CD8-positive, alpha-beta T cell (primary cell): ENCODE measurements at regions of chr11 and their contacts with region 1.

Region 1: GRCh38 chr11:72736452-72737069 is 15.6 kb downstream of the ARAP1 start:
- DNase-seq: peak; percentile 50 to 95 (median 75)
- ATAC-seq: peak; percentile 89
- H3K4me3 ChIP-seq: no peak overlapping the region
- H3K4me3 Mint-ChIP-seq: peak overlapping the region; percentile 47
- H3K27ac ChIP-seq: peak overlapping the region; percentile 60 to 96
- H3K27ac Mint-ChIP-seq: peak overlapping the region; percentile 99
- H3K4me1 ChIP-seq: peaks cover 53% of the 10 kb centered on the region
- H3K4me1 Mint-ChIP-seq: peaks cover 56% of the 10 kb centered on the region
- H3K27me3 ChIP-seq: no peaks in the 10 kb centered on the region
- H3K27me3 Mint-ChIP-seq: no peaks in the 10 kb centered on the region
- CTCF ChIP-seq: no peak

Region 2: GRCh38 chr11:72712168-72712751 is 24.3 kb before region 1 on chr11:
- CTCF ChIA-PET with region 1: no interaction called
- POLR2A ChIA-PET with region 1: no interaction called
- intact Hi-C with region 1: no loop called
- DNase-seq: no peak
- ATAC-seq: no peak
- H3K4me3 ChIP-seq: no peak overlapping the region
- H3K4me3 Mint-ChIP-seq: no peak overlapping the region
- H3K27ac ChIP-seq: no peak overlapping the region
- H3K27ac Mint-ChIP-seq: no peak overlapping the region
- H3K4me1 ChIP-seq: peaks cover 17% of the 10 kb centered on the region
- H3K4me1 Mint-ChIP-seq: peaks cover 23% of the 10 kb centered on the region
- H3K27me3 ChIP-seq: no peaks in the 10 kb centered on the region
- H3K27me3 Mint-ChIP-seq: no peaks in the 10 kb centered on the region
- CTCF ChIP-seq: no peak

Region 3: DNA sequence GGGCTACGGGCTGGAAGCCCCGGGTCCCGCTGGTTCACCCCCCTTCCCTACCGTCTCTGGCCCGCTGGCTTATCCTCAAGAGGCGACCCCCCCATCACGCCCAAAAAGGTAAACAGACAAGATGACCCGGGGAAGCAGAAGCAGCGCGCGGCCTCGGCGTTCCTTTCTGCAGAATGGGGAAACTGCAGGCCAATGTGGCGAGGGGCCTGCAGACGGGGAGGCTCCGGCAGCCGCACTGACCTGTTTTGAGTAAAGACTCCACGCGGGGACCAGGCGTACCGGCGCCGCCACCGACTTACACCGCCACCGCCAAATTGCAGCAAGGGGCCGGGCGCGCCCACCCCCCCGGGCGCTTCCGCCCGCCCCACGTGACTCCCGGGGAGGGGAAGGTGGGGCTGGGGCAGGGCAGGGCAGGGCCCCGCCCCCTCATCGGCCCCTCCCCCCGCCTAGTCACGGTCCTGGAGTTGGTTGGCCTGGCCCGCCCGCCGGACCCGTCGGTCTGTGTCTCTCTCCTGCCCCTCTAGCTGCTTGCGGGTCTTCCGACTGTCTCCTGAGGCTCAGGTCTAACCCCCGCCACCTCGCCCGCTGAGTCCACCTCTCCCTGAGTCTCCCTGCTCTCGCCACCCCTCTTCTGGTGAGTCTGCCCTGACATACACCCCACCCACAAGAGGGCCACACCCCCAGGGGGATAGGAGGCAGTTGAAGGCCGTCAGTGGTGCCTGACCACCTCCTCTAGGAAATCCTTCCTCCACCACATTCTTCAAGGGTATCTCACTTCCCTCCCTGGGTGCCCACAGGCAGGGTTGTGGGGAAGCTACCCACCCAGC is 15.7 kb after region 1 on chr11 and contains the start of gene ARAP1:
- CTCF ChIA-PET with region 1: interaction called, 3 read pairs
- POLR2A ChIA-PET with region 1: interaction called, 10 read pairs
- intact Hi-C with region 1: loop called (anchors 1 to 2 kb)
- DNase-seq: peak; percentile 53 to 91 (median 80)
- ATAC-seq: peak; percentile 88
- H3K4me3 ChIP-seq: peak within 1 kb of the TSS; percentile 92 to 95
- H3K4me3 Mint-ChIP-seq: peak within 1 kb of the TSS; percentile 95
- H3K27ac ChIP-seq: peak within 1 kb of the TSS; percentile 68 to 70
- H3K27ac Mint-ChIP-seq: peak within 1 kb of the TSS; percentile 94
- H3K4me1 ChIP-seq: peaks cover 40% of the 10 kb centered on the region
- H3K4me1 Mint-ChIP-seq: peaks cover 45% of the 10 kb centered on the region
- H3K27me3 ChIP-seq: no peaks in the 10 kb centered on the region
- H3K27me3 Mint-ChIP-seq: no peaks in the 10 kb centered on the region
- CTCF ChIP-seq: no peak
- total RNA-seq, gene ARAP1: 93.5 to 95.2 TPM